ENCODE measurements at regions of chr6 and their contacts with region 1.

Region 1: DNA sequence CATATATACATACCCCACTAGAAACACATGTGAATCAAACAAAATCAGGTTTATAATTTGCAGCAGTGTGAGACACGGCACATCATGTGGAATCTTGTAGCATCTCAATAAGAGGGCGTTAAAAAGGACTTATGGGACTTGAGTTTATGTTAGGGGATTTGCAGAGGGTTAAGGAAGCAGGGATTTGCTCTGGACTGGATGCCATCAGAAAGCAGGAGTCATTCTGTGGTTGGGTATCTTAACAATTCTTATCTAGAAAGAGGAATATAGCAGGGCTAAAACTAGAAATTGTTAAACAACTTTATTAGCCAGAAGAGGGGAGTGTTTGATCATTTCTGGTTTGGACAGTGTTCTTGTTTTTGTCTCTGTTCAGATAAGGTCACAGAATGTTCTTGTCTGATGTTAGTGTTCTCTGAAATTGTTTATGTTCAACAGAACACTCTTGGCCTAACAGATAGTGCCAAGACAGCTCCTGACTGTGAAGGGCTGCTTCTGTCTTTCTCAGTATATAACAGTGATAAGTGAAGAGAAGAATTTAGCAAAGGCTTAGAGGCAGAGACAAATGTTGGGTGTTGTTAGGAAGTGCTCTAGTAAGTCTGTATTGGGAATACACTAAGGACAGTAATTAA is 39.2 kb downstream of the LIN28B start:
- DNase-seq: peak; percentile 58
- ATAC-seq: peak; percentile 71
- H3K4me3 ChIP-seq: no peak overlapping the region
- H3K27ac ChIP-seq: no peak overlapping the region
- H3K4me1 ChIP-seq: no peaks in the 10 kb centered on the region
- H3K27me3 ChIP-seq: no peaks in the 10 kb centered on the region
- CTCF ChIP-seq: peak; percentile 54

Region 2: GRCh38 chr6:104936766-104937535 is 59.2 kb before region 1 on chr6:
- CTCF ChIA-PET with region 1: no interaction called
- POLR2A ChIA-PET with region 1: no interaction called
- intact Hi-C with region 1: no loop called
- DNase-seq: no peak
- ATAC-seq: no peak
- H3K4me3 ChIP-seq: no peak overlapping the region
- H3K27ac ChIP-seq: no peak overlapping the region
- H3K4me1 ChIP-seq: no peaks in the 10 kb centered on the region
- H3K27me3 ChIP-seq: peaks cover 32% of the 10 kb centered on the region
- CTCF ChIP-seq: no peak

Region 3: DNA sequence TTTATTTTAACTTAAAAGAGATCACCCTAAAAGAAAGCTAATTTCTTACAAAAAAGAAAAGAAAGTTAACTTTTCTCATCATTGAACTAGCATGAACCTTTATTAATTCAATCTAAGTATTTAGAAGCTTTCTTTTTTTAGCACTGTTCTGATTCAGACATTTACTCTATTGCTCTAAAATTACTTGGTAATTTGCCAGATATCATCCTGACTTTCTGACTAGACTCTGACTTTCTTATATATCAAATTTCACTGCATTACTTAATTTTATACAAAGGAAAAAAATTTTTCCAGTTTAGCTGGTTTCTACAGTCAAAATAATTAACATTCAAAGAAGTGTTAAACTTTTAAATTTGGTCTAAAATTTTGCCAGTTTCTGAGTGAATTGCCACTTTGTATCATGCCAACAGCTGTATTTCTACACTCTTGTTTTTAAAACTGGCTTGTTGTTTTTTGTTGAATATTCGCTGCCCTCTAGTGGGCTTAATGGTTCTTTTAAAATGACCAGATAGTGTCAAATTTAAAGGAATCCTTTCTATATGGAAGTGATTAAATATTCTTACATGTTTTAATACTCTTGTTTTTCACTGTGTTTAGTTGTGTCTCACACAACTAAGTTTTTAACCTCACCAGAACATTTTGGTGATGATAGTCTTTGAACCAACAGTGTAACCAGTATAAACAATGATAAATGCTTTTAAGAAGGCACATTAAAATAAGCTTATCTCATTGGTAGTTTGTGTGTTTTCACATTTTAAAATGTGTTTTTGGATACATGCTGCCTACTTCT is 81.7 kb after region 1 on chr6:
- CTCF ChIA-PET with region 1: interaction called, 5 read pairs
- POLR2A ChIA-PET with region 1: interaction called, 4 read pairs
- intact Hi-C with region 1: loop called (anchors 1 kb)
- DNase-seq: peak; percentile 71
- ATAC-seq: peak; percentile 61
- H3K4me3 ChIP-seq: no peak overlapping the region
- H3K27ac ChIP-seq: no peak overlapping the region; the same call in 1 of the 2 replicates
- H3K4me1 ChIP-seq: peaks cover 20% of the 10 kb centered on the region
- H3K27me3 ChIP-seq: no peaks in the 10 kb centered on the region
- CTCF ChIP-seq: peak; percentile 78

Region 4: GRCh38 chr6:105301072-105301503 is 305.0 kb after region 1 on chr6:
- CTCF ChIA-PET with region 1: no interaction called
- POLR2A ChIA-PET with region 1: no interaction called
- intact Hi-C with region 1: loop called (anchors 10 kb)
- DNase-seq: no peak
- ATAC-seq: no peak
- H3K4me3 ChIP-seq: no peak overlapping the region
- H3K27ac ChIP-seq: no peak overlapping the region
- H3K4me1 ChIP-seq: peaks cover 10% of the 10 kb centered on the region; the same call in 1 of the 2 replicates
- H3K27me3 ChIP-seq: no peaks in the 10 kb centered on the region
- CTCF ChIP-seq: no peak